ENCODE measurements at regions of chr17 and their contacts with region 1.

Region 1: DNA sequence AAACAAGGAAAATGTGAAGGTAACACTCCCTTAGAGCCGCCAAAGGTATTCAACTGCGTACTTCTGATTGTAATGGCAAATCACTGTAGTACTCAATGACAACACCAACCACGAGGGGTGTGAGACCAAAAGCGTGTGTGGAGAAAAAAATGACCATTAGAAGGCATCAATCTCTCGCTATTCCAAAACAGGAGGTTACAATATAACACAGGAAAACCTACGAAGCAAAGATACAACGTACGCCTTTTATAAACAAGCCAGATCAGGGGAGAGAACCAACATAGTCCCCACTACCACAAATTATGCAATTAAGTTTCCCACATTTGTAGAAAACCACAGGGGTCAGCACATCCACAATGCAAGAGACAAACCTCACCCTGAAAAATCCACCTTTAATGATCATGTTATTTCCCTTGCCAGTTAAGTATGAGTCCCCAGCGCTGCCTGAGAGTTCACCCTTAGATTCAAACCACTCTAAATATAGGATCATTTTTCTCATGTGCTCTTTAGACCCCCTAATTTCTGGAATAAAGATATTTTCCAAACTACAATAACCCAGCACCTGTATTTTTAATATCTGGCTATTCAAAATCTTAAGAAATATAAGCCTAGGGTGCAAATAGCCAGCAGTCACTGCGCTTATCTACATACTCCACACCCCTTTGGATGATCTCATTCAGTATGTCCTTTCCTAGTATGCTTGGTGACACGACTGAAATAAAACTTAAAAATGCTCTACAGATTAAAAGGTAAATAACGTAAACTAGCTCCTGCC is 12.4 kb downstream of the TEX14 start:
- DNase-seq: no peak
- ATAC-seq: peak; percentile 33
- H3K4me3 Mint-ChIP-seq: no peak overlapping the region
- H3K27ac Mint-ChIP-seq: no peak overlapping the region
- H3K4me1 Mint-ChIP-seq: no peaks in the 10 kb centered on the region
- H3K27me3 Mint-ChIP-seq: peaks cover 4% of the 10 kb centered on the region

Region 2: DNA sequence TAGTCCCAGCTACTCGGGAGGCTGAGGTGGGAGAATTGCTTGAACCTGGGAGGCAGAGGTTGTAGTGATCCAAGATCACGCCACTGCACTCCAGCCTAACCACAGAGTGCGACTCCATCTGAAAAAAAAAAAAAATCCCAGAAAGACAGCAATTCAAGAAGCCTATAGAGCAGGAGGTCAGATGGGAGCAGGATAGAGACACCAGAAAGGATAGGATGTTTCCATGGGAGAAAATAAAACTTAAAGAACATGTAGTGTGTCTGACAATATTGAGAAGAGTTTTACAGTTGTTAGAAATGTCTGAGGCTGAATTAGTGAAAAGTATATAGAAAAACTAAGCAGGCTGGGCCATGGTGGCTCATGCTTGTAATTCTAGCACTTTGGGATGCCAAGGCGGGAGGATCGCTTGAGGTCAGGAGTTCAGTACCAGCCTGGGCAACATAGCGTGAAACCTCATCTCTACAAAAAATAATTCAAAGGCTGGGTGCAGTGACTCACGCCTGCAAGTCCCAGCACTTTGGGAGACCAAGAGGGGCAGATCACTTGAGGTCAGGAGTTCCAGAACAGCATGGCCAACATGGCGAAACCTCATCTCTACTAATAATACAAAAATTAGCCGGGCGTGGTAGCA is 442.5 kb after region 1 on chr17:
- CTCF ChIA-PET with region 1: no interaction called
- POLR2A ChIA-PET with region 1: interaction called, 10 read pairs
- intact Hi-C with region 1: no loop called
- DNase-seq: no peak
- ATAC-seq: no peak
- H3K4me3 Mint-ChIP-seq: no peak overlapping the region
- H3K27ac Mint-ChIP-seq: no peak overlapping the region
- H3K4me1 Mint-ChIP-seq: peaks cover 2% of the 10 kb centered on the region
- H3K27me3 Mint-ChIP-seq: no peaks in the 10 kb centered on the region

Measured in activated CD4-positive, alpha-beta T cell treated with anti-CD3 and anti-CD28 coated beads for 36 hours (primary cell).